Ovary (tissue), 10 donors: ENCODE measurements at regions of chr10 and their contacts with region 1.

Region 1: DNA sequence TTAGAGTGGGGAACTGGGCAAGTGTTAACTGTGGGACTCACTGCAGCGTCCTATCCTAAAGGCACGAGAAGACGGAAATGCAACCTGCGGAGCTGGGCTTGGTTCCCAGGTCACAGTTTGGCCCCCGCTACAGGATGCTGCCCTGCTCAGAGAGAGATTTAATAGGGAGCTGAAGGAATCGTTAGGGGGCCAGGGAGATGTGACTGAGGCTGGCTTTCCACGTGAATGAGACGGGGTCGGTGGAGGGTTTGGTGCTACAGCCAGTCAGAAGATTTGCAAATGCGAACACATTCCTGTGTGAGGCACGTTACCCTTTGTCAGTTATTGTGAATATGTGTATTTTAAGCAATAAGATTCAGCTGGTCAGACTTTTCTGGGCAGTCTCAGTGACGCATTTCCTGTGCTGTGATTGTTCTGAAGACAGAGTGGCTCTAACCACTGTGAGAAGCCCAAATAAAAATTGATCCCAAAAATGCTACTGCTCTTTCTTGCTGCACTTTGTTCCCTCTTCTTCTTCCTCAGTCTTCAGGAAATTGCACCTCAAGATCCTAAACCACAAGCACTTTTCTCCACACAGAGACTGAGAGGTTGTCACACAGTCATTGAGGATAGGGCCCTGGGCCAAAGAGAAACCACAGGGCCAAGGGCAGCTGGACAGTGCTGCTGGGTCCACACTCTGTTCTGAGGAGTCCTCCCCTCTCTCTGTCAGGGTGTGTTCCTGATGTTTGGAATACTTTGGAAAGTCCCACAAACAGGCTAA is 21.2 kb downstream of the CYP17A1 start:
- DNase-seq: peak; percentile 44 to 69 (median 59)
- H3K4me3 ChIP-seq: no peak overlapping the region
- H3K27ac ChIP-seq: peak overlapping the region; percentile 75 to 84
- H3K4me1 ChIP-seq: peaks cover 16% of the 10 kb centered on the region
- H3K27me3 ChIP-seq: no peaks in the 10 kb centered on the region
- CTCF ChIP-seq: no peak
- EP300 ChIP-seq: no peak
- POLR2A ChIP-seq: peak; percentile 30

Region 2: GRCh38 chr10:102735065-102735562 is 80.9 kb before region 1 on chr10:
- intact Hi-C with region 1: loop called in 3 of 4 experiments (anchors 5 to 10 kb)
- DNase-seq: peak in 1 of 5 donors; percentile 55
- H3K4me3 ChIP-seq: no peak overlapping the region
- H3K27ac ChIP-seq: no peak overlapping the region
- H3K4me1 ChIP-seq: no peaks in the 10 kb centered on the region
- H3K27me3 ChIP-seq: no peaks in the 10 kb centered on the region
- CTCF ChIP-seq: no peak
- EP300 ChIP-seq: no peak
- POLR2A ChIP-seq: no peak

Region 3: DNA sequence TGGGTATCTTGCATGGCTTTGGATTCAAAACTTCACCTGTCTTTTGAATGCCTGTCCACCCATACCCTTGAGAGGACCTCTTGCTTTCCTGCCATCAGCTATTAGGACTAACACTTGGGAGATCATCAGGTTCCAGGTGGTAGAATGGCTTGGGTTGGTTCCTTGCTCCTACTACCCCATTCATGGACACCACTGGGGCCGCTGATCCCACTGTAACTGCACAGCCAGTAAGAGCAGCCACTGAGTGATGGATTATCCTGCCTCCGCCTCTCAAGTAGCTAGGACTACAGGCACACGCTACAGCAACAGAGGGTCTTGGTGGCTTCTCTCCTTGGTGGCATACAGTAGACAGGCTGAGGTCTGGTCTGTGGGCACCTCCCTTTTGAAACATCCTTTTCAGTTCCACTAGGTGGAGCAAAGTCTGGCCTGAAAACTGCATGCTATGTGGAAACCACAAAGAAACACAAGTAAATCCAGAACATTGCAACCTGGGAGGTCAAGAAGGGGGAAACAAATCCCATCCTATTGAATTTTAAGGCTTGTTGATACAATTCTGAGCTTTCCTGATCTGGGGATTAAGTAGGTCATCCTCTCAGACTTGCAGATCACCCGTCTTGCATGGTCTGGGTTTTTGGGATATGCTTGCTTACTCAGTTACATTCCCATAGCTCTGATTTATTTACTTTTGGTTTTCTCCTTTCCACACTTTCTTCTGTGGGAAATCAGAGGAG is 62.9 kb before region 1 on chr10:
- intact Hi-C with region 1: loop called in 1 of 4 experiments (anchors 5 kb)
- DNase-seq: peak in 3 of 5 donors; percentile 27 to 47 (median 38)
- H3K4me3 ChIP-seq: no peak overlapping the region
- H3K27ac ChIP-seq: peak overlapping the region; percentile 43 to 53
- H3K4me1 ChIP-seq: peaks cover 12% of the 10 kb centered on the region
- H3K27me3 ChIP-seq: no peaks in the 10 kb centered on the region
- CTCF ChIP-seq: peak in 2 of 3 donors; percentile 53 to 54
- EP300 ChIP-seq: no peak
- POLR2A ChIP-seq: no peak

Region 4: GRCh38 chr10:102869258-102870198 is 53.6 kb after region 1 on chr10 and contains the start of gene AS3MT:
- intact Hi-C with region 1: no loop called
- DNase-seq: peak; percentile 52 to 75 (median 57)
- H3K4me3 ChIP-seq: peak within 1 kb of the TSS; percentile 61
- H3K27ac ChIP-seq: peak within 1 kb of the TSS in 1 of 2 donors; percentile 21
- H3K4me1 ChIP-seq: peaks cover 2% of the 10 kb centered on the region
- H3K27me3 ChIP-seq: no peaks in the 10 kb centered on the region
- CTCF ChIP-seq: no peak
- EP300 ChIP-seq: no peak
- POLR2A ChIP-seq: no peak
- total RNA-seq, gene AS3MT: 1.5 to 6.4 (median 4.9) TPM